A549 (cell line): ENCODE measurements at regions of chrX and their contacts with region 1.

Region 1: GRCh38 chrX:46758906-46759644 is at the start of gene SLC9A7:
- DNase-seq: peak; percentile 55 to 84
- ATAC-seq: peak; percentile 89 to 92
- H3K4me3 ChIP-seq: peak within 1 kb of the TSS; percentile 89
- H3K27ac ChIP-seq: peak within 1 kb of the TSS; percentile 87 to 93
- H3K4me1 ChIP-seq: peaks cover 23% of the 10 kb centered on the region
- CTCF ChIP-seq: peak; percentile 86
- EP300 ChIP-seq: no peak
- POLR2A ChIP-seq: peak; percentile 42; the same call in 1 of the 2 replicates
- RAD21 ChIP-seq: peak; percentile 91 to 98
- polyA plus RNA-seq, gene SLC9A7: 21.1 and 22.3 TPM in 2 replicates

Region 2: DNA sequence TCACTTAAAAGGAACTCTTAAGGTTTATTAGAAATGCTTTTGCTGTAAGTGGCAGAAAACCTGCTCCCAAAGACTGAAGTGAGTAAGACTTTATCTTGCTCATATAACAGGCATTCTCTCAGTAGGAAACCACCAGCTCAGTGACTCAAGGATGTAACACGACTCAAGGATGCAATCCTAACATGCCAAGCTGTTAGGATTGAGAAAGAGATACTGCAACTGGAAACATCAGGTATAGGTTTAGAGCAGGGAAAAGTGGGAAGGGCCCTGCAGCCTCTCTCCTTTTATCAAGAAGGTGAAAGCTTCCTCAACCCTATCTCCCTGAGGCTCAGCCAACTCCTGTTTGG is 11.7 kb after region 1 on chrX:
- CTCF ChIA-PET with region 1: interaction called, 18 read pairs
- POLR2A ChIA-PET with region 1: interaction called, 3 read pairs
- DNase-seq: peak in 1 of 2 experiments; percentile 58
- ATAC-seq: peak; percentile 92 to 96
- H3K4me3 ChIP-seq: no peak overlapping the region
- H3K27ac ChIP-seq: peak overlapping the region; percentile 64 to 84; a peak in 5 of 6 replicates
- H3K4me1 ChIP-seq: peaks cover 31% of the 10 kb centered on the region
- CTCF ChIP-seq: no peak
- EP300 ChIP-seq: no peak
- POLR2A ChIP-seq: no peak
- RAD21 ChIP-seq: no peak

Region 3: DNA sequence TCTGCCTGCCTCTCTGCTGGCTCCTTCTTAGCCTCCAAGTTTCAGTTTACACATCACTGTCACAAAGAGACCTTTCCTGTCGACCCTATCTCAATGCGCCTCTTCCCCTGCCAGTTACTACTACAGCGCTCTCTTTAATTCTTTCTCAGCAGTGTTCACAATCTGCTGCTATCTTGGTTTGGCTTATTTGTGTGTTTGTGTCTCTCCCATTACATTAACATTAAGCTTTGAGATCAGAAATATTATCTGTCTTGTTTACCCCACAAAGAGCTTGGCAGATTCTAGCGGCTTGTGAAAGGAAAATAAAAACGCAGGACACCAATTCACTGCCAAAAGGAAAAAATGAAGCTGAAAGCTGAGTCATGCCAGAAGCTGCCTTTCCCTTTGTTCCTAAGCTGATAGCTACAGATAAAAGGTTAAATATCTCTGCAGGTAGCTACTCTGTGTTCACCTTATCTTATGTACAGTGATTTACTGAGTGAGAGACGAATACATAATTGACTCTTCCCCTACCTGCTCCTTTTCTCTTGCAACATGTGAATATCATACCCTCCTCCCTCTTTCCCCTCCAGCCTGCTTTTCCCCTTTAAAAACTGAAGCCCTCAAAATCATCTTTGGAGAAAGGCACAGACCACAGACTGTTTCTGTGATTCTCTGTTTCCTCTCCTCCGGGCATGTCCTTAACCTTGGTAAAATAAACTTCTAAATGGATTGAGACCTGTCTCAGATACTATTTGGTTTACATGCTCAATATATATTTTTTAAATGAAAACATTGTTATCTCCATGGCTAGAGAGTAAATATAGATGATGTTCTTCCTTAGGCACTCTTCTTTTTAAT is 19.1 kb after region 1 on chrX:
- CTCF ChIA-PET with region 1: interaction called, 40 read pairs
- POLR2A ChIA-PET with region 1: no interaction called
- DNase-seq: no peak
- ATAC-seq: peak in 1 of 2 experiments; percentile 42; a peak in 1 of 6 replicates
- H3K4me3 ChIP-seq: no peak overlapping the region
- H3K27ac ChIP-seq: peak overlapping the region; percentile 78 to 84
- H3K4me1 ChIP-seq: peaks cover 16% of the 10 kb centered on the region
- CTCF ChIP-seq: no peak
- EP300 ChIP-seq: no peak
- POLR2A ChIP-seq: no peak
- RAD21 ChIP-seq: no peak